Panc1 (cell line): ENCODE measurements at regions of chr16 and their contacts with region 1.

Region 1: DNA sequence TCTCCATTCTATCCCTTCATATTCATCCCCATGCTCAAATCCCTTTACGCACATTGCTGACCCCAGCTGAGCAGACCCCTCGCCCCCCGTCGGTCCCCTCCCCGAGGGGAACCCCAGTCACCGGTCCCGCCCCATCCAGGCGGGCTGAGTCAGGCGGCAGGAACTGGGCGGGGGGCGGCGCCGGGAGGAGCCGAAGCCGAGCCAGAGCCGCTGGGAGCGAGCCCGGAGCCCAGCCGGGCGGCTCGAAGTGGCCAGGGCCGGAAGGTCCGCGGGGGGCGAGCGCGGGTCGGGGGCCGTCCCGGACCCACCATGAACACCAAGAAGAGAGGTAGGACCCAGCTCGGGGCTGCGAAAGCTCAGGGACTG is 8.6 kb downstream of the RIPOR1 start:
- DNase-seq: no peak
- ATAC-seq: peak; percentile 74
- H3K4me3 ChIP-seq: peak overlapping the region; percentile 49 to 59
- H3K27ac ChIP-seq: peak overlapping the region; percentile 63
- H3K4me1 ChIP-seq: peaks cover 6% of the 10 kb centered on the region; the same call in 1 of the 2 replicates
- H3K27me3 ChIP-seq: no peaks in the 10 kb centered on the region
- CTCF ChIP-seq: no peak

Region 2: GRCh38 chr16:67521095-67521804 is 16.0 kb before region 1 on chr16:
- CTCF ChIA-PET with region 1: interaction called, 11 read pairs
- POLR2A ChIA-PET with region 1: no interaction called
- in situ Hi-C with region 1: no loop called
- intact Hi-C with region 1: no loop called
- DNase-seq: peak; percentile 85
- ATAC-seq: peak; percentile 96
- H3K4me3 ChIP-seq: peak overlapping the region; percentile 52 to 72
- H3K27ac ChIP-seq: peak overlapping the region; percentile 85
- H3K4me1 ChIP-seq: no peaks in the 10 kb centered on the region; the same call in 1 of the 2 replicates
- H3K27me3 ChIP-seq: no peaks in the 10 kb centered on the region
- CTCF ChIP-seq: peak; percentile 94

Region 3: DNA sequence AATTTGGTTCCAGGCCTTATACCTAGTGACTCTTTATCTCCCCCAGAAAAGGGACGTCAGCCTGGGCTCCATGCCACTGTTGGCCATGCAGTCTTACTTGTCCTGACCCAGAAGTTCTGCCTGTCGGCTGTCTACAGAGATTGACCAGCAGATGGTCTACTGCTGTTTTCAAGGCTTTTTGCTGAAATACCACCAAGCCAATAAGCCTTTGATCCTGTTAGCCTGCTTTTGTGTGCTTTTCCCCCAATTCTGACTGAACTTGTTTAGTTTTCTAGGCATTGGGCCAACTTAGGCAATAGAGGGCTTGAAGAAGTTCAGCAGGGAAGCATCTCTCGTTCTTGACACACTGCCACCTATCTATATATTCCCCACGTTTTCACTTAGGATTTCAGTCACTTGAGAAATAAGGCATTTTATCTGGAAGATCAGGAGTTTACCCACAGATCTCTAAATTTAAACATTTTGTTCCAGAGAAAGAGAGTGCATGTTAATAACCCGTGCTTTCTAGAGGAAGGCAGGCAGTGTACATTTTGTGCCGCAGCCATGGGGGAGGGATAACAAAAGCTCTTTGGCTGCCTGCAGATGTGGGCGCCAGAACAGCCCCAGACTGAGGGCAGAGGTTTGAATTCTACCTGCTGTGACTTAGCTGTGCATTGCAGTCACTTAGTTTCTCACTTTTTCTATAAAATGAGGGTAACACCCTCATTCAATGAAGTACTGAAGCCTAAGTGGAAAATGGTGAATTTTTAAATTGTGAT is 95.3 kb after region 1 on chr16:
- CTCF ChIA-PET with region 1: no interaction called
- POLR2A ChIA-PET with region 1: interaction called, 10 read pairs
- in situ Hi-C with region 1: no loop called
- intact Hi-C with region 1: no loop called
- DNase-seq: no peak
- ATAC-seq: no peak
- H3K4me3 ChIP-seq: no peak overlapping the region
- H3K27ac ChIP-seq: no peak overlapping the region
- H3K4me1 ChIP-seq: no peaks in the 10 kb centered on the region
- H3K27me3 ChIP-seq: no peaks in the 10 kb centered on the region
- CTCF ChIP-seq: no peak

Region 4: DNA sequence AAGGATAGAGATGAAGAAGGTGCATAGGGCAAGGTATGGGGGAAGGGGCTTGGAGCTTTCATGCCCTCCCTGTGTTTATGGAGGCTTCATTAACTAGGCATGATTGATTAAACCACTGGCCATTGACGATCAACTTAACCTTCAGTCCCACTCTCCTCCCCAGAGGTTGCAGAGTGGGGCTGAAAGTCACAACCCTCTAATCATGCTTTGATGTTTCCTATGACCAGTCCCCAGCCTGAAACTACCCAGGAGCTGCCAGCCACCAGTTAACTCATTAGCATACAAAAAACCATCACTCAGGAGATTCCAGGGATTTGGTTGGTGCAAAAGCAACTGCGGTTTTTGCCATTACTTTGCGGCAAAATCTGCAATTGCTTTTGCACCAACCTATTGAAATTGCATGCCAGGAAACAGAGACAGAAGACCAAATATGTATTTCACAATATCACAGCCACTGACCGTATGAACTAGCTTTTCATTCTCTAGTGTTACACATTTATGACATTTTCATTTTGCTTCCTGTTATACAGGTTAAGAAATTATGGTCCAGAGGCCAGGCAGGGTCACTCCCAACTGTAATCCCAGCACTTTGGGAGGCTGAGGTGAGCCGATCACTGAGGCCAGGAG is 176.5 kb after region 1 on chr16:
- CTCF ChIA-PET with region 1: no interaction called
- POLR2A ChIA-PET with region 1: interaction called, 11 read pairs
- in situ Hi-C with region 1: no loop called
- intact Hi-C with region 1: no loop called
- DNase-seq: no peak
- ATAC-seq: no peak
- H3K4me3 ChIP-seq: no peak overlapping the region
- H3K27ac ChIP-seq: no peak overlapping the region
- H3K4me1 ChIP-seq: no peaks in the 10 kb centered on the region
- H3K27me3 ChIP-seq: no peaks in the 10 kb centered on the region
- CTCF ChIP-seq: no peak